IMR-90 (cell line): ENCODE measurements at regions of chr10 and their contacts with region 1.

Region 1: DNA sequence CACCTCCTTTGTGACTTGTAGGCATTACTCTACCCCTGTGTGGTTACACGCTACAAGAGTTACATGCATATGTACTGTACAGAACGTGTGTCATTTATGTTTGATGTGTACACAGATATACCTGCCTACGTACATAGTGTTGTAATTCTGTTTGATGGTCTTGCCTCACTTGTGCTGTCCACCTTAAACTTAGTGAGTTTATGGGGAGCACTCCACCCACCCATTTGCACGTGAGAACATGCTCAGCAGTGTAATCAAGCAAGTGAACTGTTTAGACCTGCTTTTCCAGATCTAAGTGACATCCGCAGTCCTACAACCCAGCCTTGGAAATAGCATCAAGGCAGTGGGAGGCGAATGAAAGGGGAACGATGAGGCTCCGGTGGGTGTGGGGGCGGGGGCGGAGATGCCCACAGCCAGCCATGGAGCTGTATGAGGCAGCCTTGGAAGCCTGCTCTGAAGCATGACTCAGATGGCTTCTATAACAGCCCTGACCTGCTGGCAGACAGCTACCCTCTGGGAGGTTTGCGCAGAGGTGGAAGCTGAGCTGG is 52.1 kb downstream of the SUFU start:
- DNase-seq: peak; percentile 88
- ATAC-seq: peak; percentile 98
- H3K4me3 ChIP-seq: no peak overlapping the region
- H3K27ac ChIP-seq: no peak overlapping the region
- H3K4me1 ChIP-seq: peaks cover 5% of the 10 kb centered on the region
- H3K27me3 ChIP-seq: no peaks in the 10 kb centered on the region
- CTCF ChIP-seq: no peak
- POLR2A ChIP-seq: no peak
- RAD21 ChIP-seq: no peak

Region 2: GRCh38 chr10:102507515-102507914 is 48.3 kb before region 1 on chr10:
- CTCF ChIA-PET with region 1: no interaction called
- POLR2A ChIA-PET with region 1: no interaction called
- dilution Hi-C with region 1: no loop called
- in situ Hi-C with region 1: no loop called
- intact Hi-C with region 1: no loop called
- DNase-seq: no peak
- ATAC-seq: no peak
- H3K4me3 ChIP-seq: no peak overlapping the region
- H3K27ac ChIP-seq: no peak overlapping the region
- H3K4me1 ChIP-seq: peaks cover 11% of the 10 kb centered on the region
- H3K27me3 ChIP-seq: no peaks in the 10 kb centered on the region
- CTCF ChIP-seq: no peak
- POLR2A ChIP-seq: no peak
- RAD21 ChIP-seq: no peak

Region 3: GRCh38 chr10:102517553-102517952 is 38.3 kb before region 1 on chr10:
- CTCF ChIA-PET with region 1: interaction called, 4 read pairs
- POLR2A ChIA-PET with region 1: no interaction called
- dilution Hi-C with region 1: no loop called
- in situ Hi-C with region 1: no loop called
- intact Hi-C with region 1: loop called (anchors 5 kb)
- DNase-seq: peak; percentile 84
- ATAC-seq: peak; percentile 96
- H3K4me3 ChIP-seq: no peak overlapping the region
- H3K27ac ChIP-seq: no peak overlapping the region; the same call in 1 of the 2 replicates
- H3K4me1 ChIP-seq: peaks cover 5% of the 10 kb centered on the region
- H3K27me3 ChIP-seq: no peaks in the 10 kb centered on the region
- CTCF ChIP-seq: no peak
- POLR2A ChIP-seq: no peak
- RAD21 ChIP-seq: no peak

Region 4: DNA sequence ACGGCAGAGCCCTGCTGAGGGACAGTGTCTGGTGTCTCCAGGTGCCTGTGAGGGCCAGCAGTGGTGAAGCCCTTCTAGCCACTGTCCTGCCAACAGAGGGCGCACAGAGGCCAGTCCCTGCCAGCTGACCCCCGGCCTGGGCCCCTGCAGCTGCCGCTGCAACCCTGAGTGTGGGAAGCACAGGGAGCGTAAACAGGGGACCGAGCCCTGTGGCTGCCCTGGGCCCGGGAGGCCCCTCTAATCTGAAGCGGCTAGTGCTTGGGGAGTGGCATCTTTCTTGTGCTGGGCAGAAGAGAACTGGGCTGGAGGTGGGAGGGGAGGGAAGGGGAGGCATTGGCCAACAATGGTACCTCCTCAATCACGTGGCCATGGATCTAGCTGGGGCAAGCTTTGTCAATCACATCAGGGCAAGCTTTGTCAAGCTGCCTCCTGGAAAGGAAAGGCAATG is 123.0 kb after region 1 on chr10:
- CTCF ChIA-PET with region 1: no interaction called
- POLR2A ChIA-PET with region 1: no interaction called
- dilution Hi-C with region 1: no loop called
- in situ Hi-C with region 1: no loop called
- intact Hi-C with region 1: no loop called
- DNase-seq: peak; percentile 52
- ATAC-seq: peak; percentile 40
- H3K4me3 ChIP-seq: no peak overlapping the region
- H3K27ac ChIP-seq: peak overlapping the region; percentile 15
- H3K4me1 ChIP-seq: peaks cover 44% of the 10 kb centered on the region
- H3K27me3 ChIP-seq: no peaks in the 10 kb centered on the region
- CTCF ChIP-seq: peak; percentile 76
- POLR2A ChIP-seq: no peak
- RAD21 ChIP-seq: peak; percentile 70